MCF 10A (cell line): ENCODE measurements at regions of chr10 and their contacts with region 1.

Region 1: GRCh38 chr10:110354322-110354766 is 49.6 kb upstream of the SMNDC1 start:
- DNase-seq: peak; percentile 92
- H3K4me3 Mint-ChIP-seq: peak overlapping the region; percentile 30
- H3K27ac Mint-ChIP-seq: peak overlapping the region; percentile 56
- H3K4me1 Mint-ChIP-seq: peaks cover 52% of the 10 kb centered on the region
- H3K27me3 Mint-ChIP-seq: no peaks in the 10 kb centered on the region
- CTCF ChIP-seq: peak; percentile 60

Region 2: DNA sequence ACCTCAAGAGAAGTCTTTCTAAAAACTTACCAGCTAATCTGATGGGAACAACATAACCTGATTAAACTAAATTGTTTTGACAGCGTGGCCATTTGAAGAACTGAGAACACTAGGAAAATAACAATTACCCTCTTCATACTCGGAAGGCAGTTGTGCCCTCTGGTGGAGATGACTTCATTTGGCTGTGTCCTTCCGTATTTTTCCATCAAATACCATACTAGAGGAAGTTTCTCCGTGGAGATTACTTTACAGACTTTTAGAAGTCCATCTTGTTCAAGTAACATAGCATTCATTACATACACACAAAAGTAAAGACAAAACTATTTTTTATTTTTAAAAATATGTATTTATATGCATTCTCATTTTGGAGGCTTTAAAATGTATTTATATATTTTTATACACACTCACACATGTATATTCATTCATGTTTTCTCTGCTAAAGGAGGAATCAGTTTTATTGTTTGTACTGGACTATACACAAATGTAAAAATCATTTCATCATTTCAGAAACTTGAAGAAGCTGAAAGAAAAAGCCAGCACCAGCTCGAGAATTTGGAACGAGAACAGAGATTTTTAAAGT is 74.8 kb before region 1 on chr10:
- CTCF ChIA-PET with region 1: no interaction called
- POLR2A ChIA-PET with region 1: no interaction called
- intact Hi-C with region 1: no loop called
- DNase-seq: peak; percentile 71
- H3K4me3 Mint-ChIP-seq: no peak overlapping the region
- H3K27ac Mint-ChIP-seq: no peak overlapping the region
- H3K4me1 Mint-ChIP-seq: no peaks in the 10 kb centered on the region
- H3K27me3 Mint-ChIP-seq: no peaks in the 10 kb centered on the region
- CTCF ChIP-seq: peak; percentile 80

Region 3: GRCh38 chr10:110296966-110297365 is 57.4 kb before region 1 on chr10:
- CTCF ChIA-PET with region 1: no interaction called
- POLR2A ChIA-PET with region 1: no interaction called
- intact Hi-C with region 1: no loop called
- DNase-seq: no peak
- H3K4me3 Mint-ChIP-seq: no peak overlapping the region
- H3K27ac Mint-ChIP-seq: peak overlapping the region; percentile 16
- H3K4me1 Mint-ChIP-seq: peaks cover 8% of the 10 kb centered on the region
- H3K27me3 Mint-ChIP-seq: no peaks in the 10 kb centered on the region
- CTCF ChIP-seq: no peak

Region 4: GRCh38 chr10:110336111-110336721 is 18.1 kb before region 1 on chr10:
- CTCF ChIA-PET with region 1: interaction called, 21 read pairs
- POLR2A ChIA-PET with region 1: interaction called, 22 read pairs
- intact Hi-C with region 1: no loop called
- DNase-seq: peak; percentile 96
- H3K4me3 Mint-ChIP-seq: peak overlapping the region; percentile 18
- H3K27ac Mint-ChIP-seq: peak overlapping the region; percentile 59
- H3K4me1 Mint-ChIP-seq: peaks cover 33% of the 10 kb centered on the region
- H3K27me3 Mint-ChIP-seq: no peaks in the 10 kb centered on the region
- CTCF ChIP-seq: no peak

Region 5: GRCh38 chr10:110395725-110396651 is 41.6 kb after region 1 on chr10:
- CTCF ChIA-PET with region 1: interaction called, 12 read pairs
- POLR2A ChIA-PET with region 1: interaction called, 20 read pairs
- intact Hi-C with region 1: loop called (anchors 1 kb)
- DNase-seq: peak; percentile 95
- H3K4me3 Mint-ChIP-seq: no peak overlapping the region
- H3K27ac Mint-ChIP-seq: peak overlapping the region; percentile 92
- H3K4me1 Mint-ChIP-seq: peaks cover 53% of the 10 kb centered on the region
- H3K27me3 Mint-ChIP-seq: no peaks in the 10 kb centered on the region
- CTCF ChIP-seq: no peak

Region 6: GRCh38 chr10:110456523-110457091 is 102.3 kb after region 1 on chr10:
- CTCF ChIA-PET with region 1: interaction called, 4 read pairs
- POLR2A ChIA-PET with region 1: interaction called, 11 read pairs
- intact Hi-C with region 1: loop called (anchors 1 kb)
- DNase-seq: peak; percentile 87
- H3K4me3 Mint-ChIP-seq: no peak overlapping the region
- H3K27ac Mint-ChIP-seq: peak overlapping the region; percentile 41
- H3K4me1 Mint-ChIP-seq: peaks cover 33% of the 10 kb centered on the region
- H3K27me3 Mint-ChIP-seq: no peaks in the 10 kb centered on the region
- CTCF ChIP-seq: no peak

Region 7: DNA sequence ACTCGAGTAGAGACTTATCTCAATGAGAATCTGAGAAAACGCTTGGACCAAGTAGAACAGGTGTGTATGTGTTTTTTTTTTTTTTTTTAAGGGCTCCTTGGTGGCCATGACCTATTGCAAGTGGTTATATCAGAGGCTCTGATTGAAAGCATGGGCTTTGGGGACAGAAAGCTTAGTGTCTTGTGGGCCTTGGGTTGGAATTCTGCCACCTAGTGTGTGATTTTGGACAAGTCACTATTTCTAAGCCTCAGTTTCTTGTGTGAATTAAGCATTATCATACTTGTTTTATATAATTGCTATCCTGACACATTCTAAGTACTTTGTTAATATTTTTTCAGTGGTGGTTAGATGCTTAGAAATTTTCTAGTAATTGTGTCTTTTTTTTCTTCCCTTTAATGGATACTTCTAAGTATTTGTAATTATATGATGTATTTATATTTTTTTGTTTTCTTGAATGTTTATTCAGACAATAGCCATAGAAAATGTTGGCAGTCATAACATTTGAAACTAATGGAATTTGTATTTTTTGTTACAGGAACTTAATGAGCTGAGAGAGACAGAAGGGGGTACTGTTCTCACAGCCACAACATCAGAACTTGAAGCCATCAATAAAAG is 246.2 kb after region 1 on chr10:
- CTCF ChIA-PET with region 1: no interaction called
- POLR2A ChIA-PET with region 1: no interaction called
- intact Hi-C with region 1: loop called (anchors 1 kb)
- DNase-seq: peak; percentile 69
- H3K4me3 Mint-ChIP-seq: no peak overlapping the region
- H3K27ac Mint-ChIP-seq: no peak overlapping the region
- H3K4me1 Mint-ChIP-seq: no peaks in the 10 kb centered on the region
- H3K27me3 Mint-ChIP-seq: no peaks in the 10 kb centered on the region
- CTCF ChIP-seq: peak; percentile 46

Region 8: DNA sequence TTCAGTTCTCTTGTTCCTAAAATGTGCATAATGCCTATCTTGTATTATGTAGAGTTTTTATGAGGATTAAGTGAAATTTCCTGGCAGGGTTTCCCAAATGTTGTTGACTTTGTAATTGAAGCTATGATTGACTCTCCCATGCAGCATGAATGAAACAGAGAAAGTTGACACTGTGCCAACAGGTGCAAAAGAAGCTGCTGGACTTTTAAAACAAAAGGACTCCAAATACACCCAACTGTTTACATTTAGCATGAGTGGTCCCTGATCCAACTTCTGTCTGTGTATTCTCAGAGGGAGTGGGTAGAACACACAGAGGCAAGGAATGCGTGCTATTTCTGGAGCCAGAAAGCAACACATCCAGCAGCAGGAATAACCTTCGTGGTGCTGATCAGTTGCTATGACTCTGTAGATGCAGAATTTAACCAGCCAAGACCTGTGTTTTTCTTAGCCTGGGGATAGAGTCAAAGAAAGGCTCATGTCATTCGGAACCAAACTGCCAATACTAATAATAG is 275.4 kb after region 1 on chr10:
- CTCF ChIA-PET with region 1: no interaction called
- POLR2A ChIA-PET with region 1: no interaction called
- intact Hi-C with region 1: no loop called
- DNase-seq: peak; percentile 86
- H3K4me3 Mint-ChIP-seq: no peak overlapping the region
- H3K27ac Mint-ChIP-seq: no peak overlapping the region
- H3K4me1 Mint-ChIP-seq: peaks cover 31% of the 10 kb centered on the region
- H3K27me3 Mint-ChIP-seq: no peaks in the 10 kb centered on the region
- CTCF ChIP-seq: no peak

Region 9: DNA sequence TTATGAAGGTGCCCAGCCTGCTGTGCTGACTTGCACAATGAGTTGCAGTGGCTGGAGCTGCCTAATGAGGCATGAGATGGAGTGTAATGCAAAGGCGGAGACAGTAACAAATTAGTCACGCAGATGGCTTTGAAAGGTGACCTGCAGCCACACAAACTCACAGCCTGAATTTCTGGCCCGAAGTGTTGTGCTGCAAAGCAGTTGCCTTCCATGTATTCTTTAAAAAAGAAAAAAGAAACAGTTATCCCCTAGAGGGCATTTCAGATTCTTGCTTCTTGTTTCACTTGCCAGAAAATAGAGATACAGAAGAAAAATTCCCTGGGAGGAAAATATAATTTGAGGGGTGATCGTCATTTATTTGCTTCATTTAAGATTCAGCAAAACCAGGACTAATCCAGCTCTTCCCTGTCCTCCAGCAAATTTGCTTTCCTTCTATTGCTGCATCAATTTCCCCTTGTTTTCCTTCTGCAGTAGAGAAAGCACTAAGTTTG is 962.4 kb after region 1 on chr10:
- CTCF ChIA-PET with region 1: no interaction called
- POLR2A ChIA-PET with region 1: no interaction called
- intact Hi-C with region 1: no loop called
- DNase-seq: no peak
- H3K4me3 Mint-ChIP-seq: peak overlapping the region; percentile 63
- H3K27ac Mint-ChIP-seq: no peak overlapping the region
- H3K4me1 Mint-ChIP-seq: peaks cover 11% of the 10 kb centered on the region
- H3K27me3 Mint-ChIP-seq: peaks cover 13% of the 10 kb centered on the region
- CTCF ChIP-seq: no peak